ENCODE measurements at regions of chr1 and their contacts with region 1.

Region 1: DNA sequence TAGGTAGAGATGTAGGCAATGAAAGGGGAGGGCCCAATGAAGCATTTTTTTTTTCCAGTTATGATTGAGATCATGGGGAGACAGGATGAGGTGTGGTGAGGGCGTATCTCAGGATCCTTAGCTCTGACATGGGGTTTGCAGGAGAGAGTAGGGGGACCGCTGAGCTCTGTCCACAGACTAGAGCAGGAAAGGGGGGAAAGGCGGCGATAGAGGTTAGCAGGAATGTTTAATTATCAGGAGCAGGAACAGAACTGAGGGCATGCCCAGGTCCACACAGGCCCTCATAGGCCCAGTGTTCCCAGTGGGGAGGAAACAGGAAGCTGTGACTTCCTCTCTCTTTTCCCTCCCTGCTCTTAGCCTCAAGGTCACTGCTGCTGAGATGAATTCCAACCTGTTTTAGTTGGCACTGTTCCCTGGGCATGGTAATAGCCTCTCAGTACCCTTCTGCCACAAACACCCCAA is 876 bp upstream of the RXFP4 start:
- DNase-seq: peak; percentile 61 to 86 (median 78)
- ATAC-seq: peak; percentile 85
- H3K4me3 ChIP-seq: no peak overlapping the region
- H3K27ac ChIP-seq: peak overlapping the region; percentile 73 to 84 (median 81)
- H3K4me1 ChIP-seq: peaks cover 49% of the 10 kb centered on the region
- H3K27me3 ChIP-seq: no peaks in the 10 kb centered on the region
- CTCF ChIP-seq: no peak
- POLR2A ChIP-seq: peak in 2 of 3 donors; percentile 44 to 56

Region 2: DNA sequence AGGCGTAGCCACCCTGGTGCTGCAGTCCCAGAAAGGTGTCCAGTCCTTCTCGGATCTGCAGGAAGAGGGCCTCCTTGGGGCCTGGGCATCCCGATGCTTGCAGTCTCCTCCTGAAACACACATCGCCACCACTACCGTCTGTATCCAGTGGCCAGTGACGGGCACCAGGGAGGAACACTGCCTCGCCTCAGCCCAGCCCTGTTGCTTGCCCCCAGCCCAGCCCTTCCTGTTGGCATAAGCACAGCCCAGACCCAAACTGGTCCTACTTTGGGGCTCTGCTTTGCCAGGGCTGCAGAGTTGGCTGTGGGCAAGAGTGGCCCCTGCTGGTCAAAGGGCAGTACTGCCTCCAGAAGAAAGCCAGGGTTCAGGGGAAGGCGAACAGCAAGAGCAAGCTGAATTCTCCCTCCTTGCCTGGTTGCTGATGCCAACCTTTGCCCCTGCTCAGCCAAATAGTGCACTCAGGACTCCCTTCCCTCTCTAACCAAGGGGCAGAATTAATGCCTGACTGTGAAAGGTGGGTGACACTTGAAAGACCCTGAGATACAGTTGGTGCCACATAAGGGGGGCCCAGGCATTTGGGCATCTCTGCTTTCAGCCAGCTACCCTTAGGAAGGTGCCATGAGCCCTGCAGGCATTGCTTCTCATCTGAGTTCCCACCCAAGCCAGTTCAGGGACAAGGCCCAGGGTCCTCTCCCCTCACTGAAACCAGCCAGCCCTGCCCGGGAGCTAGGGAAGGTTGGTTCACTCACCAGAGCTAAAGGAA is 48.9 kb after region 1 on chr1:
- intact Hi-C with region 1: loop called (anchors 5 kb)
- DNase-seq: peak; percentile 66 to 72 (median 72)
- ATAC-seq: peak; percentile 90
- H3K4me3 ChIP-seq: no peak overlapping the region
- H3K27ac ChIP-seq: peak overlapping the region in 1 of 4 donors; percentile 2
- H3K4me1 ChIP-seq: no peaks in the 10 kb centered on the region
- H3K27me3 ChIP-seq: no peaks in the 10 kb centered on the region
- CTCF ChIP-seq: peak; percentile 90 to 97 (median 95)
- POLR2A ChIP-seq: no peak

Region 3: DNA sequence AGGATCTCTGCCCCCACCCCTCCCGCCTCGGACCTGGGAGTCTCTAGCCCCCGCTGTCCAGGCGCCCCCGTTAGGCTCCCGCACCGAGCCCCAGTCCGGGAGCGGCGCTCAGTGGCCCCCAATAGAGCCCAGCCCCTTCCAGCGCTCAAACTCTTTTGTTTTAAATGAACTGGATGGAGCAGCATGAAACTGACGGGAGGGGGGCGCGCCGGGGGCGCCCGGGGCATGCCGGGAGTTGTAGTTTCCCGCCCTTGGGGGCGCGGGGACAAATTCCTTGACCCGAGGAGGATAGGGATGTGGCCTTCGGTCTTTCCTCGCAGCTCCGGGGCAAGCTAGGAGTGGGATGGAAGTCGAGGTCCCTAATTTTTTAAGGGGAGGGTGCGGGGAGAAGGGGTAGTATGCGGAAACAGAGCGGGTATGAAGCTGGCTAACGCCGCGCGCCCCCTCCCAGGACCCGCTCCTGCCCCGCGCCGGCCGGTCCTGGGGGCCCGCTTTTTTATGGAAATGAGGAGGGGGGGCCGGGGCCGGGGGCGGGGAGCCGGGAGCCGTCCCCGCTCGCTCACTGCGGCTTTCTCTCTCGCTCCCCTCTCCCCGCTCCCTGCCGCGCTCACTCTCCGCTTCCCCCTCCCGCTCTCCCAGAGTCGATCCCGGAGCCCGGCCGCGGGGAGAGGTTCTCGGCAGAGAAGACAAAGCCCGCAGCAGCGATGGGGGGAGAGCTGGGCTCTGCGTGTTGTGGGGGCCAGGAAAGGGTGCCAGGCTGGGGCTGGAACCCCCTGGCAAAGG is 141.9 kb after region 1 on chr1 and contains the start of gene MEX3A:
- intact Hi-C with region 1: no loop called
- DNase-seq: peak; percentile 61 to 74 (median 70)
- ATAC-seq: peak; percentile 83
- H3K4me3 ChIP-seq: peak within 1 kb of the TSS; percentile 50 to 93
- H3K27ac ChIP-seq: peak within 1 kb of the TSS in 3 of 4 donors; percentile 28 to 62 (median 30)
- H3K4me1 ChIP-seq: peaks cover 24% of the 10 kb centered on the region
- H3K27me3 ChIP-seq: no peaks in the 10 kb centered on the region
- CTCF ChIP-seq: no peak
- POLR2A ChIP-seq: peak in 2 of 3 donors; percentile 8 to 29
- total RNA-seq, gene MEX3A: 0.99 to 4.7 TPM

Region 4: GRCh38 chr1:156601122-156601830 is 660.7 kb after region 1 on chr1 and contains the start of gene GPATCH4:
- intact Hi-C with region 1: no loop called
- DNase-seq: peak; percentile 70 to 83 (median 78)
- ATAC-seq: peak; percentile 88
- H3K4me3 ChIP-seq: peak within 1 kb of the TSS; percentile 61 to 97
- H3K27ac ChIP-seq: peak within 1 kb of the TSS; percentile 20 to 77 (median 60)
- H3K4me1 ChIP-seq: peaks cover 24% of the 10 kb centered on the region
- H3K27me3 ChIP-seq: no peaks in the 10 kb centered on the region
- CTCF ChIP-seq: no peak
- POLR2A ChIP-seq: peak in 2 of 3 donors; percentile 66 to 80
- total RNA-seq, gene GPATCH4: 8.9 to 9.6 TPM

Measured in body of pancreas (tissue), 4 donors.